HEK293T (cell line): ENCODE measurements at regions of chr11 and their contacts with region 1.

Region 1: DNA sequence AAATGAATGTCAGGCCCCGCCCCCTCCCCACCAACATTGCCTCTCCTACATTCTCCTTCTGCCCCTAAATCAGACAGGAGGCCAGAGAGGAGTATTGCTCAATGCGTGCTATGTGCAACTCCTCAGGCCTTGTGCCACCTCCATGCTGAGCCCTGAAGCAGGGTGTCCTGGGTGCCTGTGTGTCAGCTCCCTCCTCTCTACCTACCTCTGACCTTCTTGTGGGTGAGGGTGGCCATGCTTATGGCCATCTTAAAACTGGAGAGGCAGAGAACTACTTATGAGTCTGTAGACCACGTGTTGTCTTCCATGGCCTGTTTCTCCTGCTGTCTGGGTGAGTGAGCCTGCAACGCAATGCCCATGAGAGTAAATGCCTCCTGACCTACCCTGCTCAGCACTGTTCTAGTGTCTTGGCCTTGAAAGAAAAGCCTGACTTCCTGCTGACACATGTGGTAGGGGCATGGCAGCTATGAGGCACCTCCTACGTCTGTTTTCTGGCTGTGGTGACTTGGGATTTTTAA is 10.5 kb downstream of the MCAM start:
- DNase-seq: no peak

Region 2: DNA sequence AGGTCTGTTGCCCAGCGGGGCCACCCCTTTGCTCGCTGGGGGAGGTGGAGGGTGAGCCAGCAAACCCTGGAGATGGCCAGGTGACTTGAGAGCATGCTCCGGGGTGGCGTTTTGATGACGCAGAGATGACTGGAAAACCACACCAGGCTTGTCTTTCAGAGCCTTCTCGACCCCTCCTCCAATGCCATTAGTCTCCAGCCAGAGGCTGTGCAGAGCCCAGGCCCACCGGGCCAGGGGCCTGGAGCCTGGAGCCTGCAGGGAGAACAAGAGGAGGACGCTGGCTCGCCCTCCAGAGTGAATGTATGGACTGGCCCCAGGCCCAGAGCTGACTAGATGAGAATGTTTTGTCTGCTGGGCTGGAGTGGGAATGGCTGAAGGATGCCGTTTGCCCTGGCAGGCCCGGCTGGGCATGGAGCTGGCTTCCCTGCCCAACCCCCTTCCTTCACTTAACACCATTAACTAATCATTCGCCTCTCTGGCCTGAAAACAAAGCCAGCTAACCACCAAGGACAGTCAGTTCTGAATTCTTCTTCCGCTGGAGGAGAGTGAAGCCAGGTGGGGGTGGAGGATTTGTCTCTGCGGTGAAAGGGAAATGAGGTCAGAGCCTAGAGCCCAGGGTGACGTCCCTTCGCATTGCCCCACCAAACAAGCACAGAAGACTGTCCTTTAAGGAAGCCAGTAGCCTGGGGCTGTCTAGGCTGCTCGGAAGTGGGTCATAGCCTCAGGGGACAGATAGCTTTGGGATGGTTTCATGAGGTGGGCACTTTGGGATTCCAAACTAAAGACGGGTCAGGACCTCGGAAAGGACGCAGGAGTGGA is 12.1 kb after region 1 on chr11:
- CTCF ChIA-PET with region 1: interaction called, 4 read pairs
- POLR2A ChIA-PET with region 1: interaction called, 11 read pairs
- DNase-seq: no peak